ENCODE measurements at regions of chr18 and their contacts with region 1.

Region 1: GRCh38 chr18:65792461-65793074 is 41.8 kb downstream of the CDH7 start:
- DNase-seq: no peak
- H3K4me3 ChIP-seq: no peak overlapping the region
- H3K27ac ChIP-seq: no peak overlapping the region
- H3K4me1 ChIP-seq: no peaks in the 10 kb centered on the region
- CTCF ChIP-seq: no peak

Region 2: GRCh38 chr18:64037812-64038414 is 1754.7 kb before region 1 on chr18:
- CTCF ChIA-PET with region 1: no interaction called
- POLR2A ChIA-PET with region 1: interaction called, 14 read pairs
- intact Hi-C with region 1: no loop called
- DNase-seq: peak; percentile 35
- H3K4me3 ChIP-seq: no peak overlapping the region
- H3K27ac ChIP-seq: no peak overlapping the region
- H3K4me1 ChIP-seq: no peaks in the 10 kb centered on the region
- CTCF ChIP-seq: peak; percentile 73

Region 3: DNA sequence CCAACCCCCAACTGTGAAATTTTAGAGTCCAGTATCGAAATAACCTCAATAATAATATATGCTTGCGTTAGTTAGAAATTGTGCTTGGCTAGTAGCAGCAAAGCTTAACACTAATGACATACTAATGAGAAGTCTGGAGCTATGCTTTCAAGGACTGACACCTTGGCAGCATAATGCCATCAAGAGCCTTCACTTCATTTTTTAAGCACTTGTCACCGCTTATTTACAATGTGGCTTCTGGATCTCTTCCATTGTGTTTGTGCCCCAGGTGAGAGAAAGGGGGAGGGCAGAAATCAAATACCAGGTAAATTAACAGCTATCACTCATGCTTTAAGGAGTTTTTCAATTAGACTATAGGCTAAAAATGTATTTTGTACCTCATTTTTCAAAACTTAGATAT is 59.7 kb after region 1 on chr18:
- CTCF ChIA-PET with region 1: no interaction called
- POLR2A ChIA-PET with region 1: no interaction called
- intact Hi-C with region 1: no loop called
- DNase-seq: no peak
- H3K4me3 ChIP-seq: no peak overlapping the region
- H3K27ac ChIP-seq: no peak overlapping the region
- H3K4me1 ChIP-seq: no peaks in the 10 kb centered on the region
- CTCF ChIP-seq: no peak